SK-MEL-5 (cell line): ENCODE measurements at regions of chr11 and their contacts with region 1.

Region 1: GRCh38 chr11:74559110-74559933 is 33.1 kb upstream of the POLD3 start:
- DNase-seq: no peak

Region 2: DNA sequence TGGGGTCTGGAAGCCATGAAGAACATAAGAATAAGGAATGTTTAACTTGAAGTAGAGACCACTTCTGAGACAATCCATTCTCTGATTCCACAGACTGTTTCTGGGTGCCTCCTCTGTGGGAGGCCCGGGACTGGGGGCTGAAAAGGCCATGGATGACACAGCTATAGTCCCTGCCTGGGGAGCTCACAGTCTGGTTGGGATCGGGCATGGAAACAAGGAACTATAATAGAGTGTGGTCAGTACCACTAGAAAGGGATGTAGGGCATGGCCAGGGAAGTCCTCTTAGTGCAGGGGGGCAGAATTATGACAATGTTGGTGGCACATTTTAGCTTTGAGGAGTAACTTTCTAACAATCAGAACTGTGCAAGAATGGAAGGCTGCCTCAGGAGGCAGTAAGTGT is 82.8 kb before region 1 on chr11:
- in situ Hi-C with region 1: no loop called
- DNase-seq: no peak

Region 3: DNA sequence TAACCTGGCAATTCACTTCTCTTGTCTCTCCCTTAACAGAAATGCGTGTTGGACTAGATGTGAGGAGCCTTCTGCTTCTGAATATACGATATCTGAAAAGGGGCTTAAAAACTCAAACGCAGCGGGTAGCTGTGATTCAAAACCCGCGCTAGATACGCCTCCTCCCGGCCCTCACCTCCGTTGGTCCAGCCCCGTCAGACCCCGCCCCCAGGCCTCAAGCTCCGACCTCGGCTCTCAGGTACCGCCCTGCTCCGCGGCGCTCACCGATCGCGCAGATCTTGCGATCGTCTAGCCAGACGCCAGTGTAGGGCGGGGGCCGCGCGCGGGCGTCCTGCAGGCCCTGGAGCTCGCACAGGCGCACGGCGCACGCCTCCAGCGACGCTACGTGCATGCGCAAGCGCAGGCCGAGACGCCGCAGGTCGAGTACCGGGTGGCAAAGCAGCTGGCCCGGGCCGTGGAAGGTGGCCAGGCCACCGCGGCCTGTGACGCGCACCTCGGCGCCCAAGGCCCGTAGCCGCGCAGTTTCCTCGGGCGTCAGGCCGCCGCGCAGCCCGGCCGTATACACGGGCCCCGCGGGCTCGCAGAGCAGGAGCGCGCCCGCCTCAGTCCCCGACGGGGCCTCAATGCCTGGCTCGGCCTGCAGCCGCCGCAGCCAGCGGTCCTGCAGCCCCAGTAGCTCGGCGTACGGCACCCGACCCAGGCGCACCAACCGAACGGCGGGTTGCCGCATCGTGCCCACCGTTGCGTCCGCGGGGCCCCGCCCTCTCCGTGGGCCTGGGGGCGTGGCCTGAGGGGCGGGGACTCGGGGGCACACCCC is 66.1 kb before region 1 on chr11 and contains the start of gene LIPT2:
- in situ Hi-C with region 1: loop called (anchors 5 kb)
- DNase-seq: peak; percentile 99
- total RNA-seq, gene LIPT2: 9.0 and 9.3 TPM in 2 replicates

Region 4: DNA sequence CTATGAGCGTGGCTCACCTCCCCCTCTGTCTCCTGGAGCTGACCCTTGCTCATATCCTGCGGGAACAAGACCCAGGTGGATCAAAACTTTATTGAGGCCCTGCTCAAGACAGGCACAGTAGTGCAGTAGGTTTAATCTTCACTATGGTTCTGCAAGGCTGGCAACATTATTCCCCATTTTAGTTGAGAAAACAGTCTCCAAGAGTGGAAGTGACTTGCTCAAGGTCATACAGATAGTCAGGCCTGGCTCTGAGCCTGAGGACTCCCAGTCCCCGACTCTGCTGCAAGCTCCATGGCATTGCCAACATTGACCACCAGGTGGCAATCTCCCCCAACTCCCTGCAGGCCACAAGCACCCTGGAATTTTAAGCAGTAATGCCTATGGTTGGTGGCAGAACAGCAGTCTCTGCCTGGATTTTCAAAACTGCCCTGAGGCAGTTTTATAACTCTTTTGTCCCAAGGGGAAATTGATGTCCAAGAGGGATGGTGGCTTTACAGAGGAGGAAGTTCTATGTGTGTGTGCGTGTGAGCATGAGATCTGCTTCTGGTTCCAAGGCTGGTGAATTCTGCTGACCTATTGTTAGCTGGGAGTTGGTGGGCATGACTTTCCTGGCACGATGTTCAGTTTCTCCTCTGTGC is 463.6 kb after region 1 on chr11:
- in situ Hi-C with region 1: no loop called
- DNase-seq: peak; percentile 97